Activated T-helper 2 cell treated with anti-CD3 and anti-CD28 coated beads, Interferon-gamma antibody, Interleukin-2, Interleukin-4, amounts not matched to agents 10 μg/mL and 5 μg/mL and 100 μg/mL, durations not matched to agents 14 hours and 24 hours and 36 hours (primary cell): ENCODE measurements at regions of chr19 and their contacts with region 1.

Region 1: DNA sequence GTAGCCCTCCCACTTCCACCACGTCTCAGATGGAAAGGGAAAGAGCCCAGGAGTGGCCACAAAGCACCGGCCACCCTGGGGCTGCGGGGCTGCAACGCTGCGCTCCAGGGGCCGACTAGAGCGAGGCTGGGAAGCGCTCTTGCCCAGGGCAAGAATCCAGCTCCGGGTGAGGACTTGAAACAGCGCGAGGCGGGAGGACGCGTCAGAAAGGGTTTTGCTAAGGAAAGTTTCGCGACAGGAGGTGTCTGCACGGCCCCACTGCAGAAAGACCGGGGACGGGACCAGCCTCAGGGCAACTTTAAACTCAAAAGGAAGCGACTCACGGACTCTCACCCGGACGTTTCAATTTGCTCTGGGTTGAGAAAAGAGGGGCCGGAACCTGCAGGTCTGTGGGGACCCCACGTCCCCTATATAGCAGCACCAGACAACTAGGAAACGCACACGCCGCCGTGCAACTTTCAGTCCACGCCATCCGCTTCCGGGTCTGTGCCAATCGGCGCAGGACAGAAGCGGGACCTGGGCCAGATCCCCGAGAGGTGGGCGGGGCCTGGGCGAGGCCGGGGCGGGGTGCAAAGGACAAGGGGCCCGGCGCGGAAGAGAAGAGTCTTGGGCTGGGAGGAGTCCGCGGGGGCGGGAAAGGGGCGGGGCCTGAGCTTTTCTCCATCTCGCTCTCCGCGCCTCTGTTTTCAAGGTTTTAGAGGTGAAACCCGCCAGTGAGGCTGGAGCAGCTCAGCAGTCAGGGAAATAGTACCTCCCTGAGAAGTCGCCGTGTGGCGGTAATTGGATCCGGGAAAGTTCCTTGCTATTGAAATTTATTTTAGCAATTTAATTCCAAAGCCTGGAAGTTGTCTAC is at the start of gene ZNF816:
- DNase-seq: peak; percentile 98
- H3K4me3 Mint-ChIP-seq: peak within 1 kb of the TSS; percentile 97
- H3K27ac Mint-ChIP-seq: peak within 1 kb of the TSS; percentile 92
- H3K4me1 Mint-ChIP-seq: peaks cover 14% of the 10 kb centered on the region
- H3K27me3 Mint-ChIP-seq: no peaks in the 10 kb centered on the region
- total RNA-seq, gene ZNF816: 8.1 and 8.4 TPM in 2 replicates

Region 2: GRCh38 chr19:52637718-52638585 is 324.7 kb before region 1 on chr19 and contains the start of gene ZNF83:
- intact Hi-C with region 1: loop called (anchors 10 kb)
- DNase-seq: peak; percentile 92
- H3K4me3 Mint-ChIP-seq: peak within 1 kb of the TSS; percentile 89
- H3K27ac Mint-ChIP-seq: peak within 1 kb of the TSS; percentile 95
- H3K4me1 Mint-ChIP-seq: peaks cover 13% of the 10 kb centered on the region
- H3K27me3 Mint-ChIP-seq: no peaks in the 10 kb centered on the region
- total RNA-seq, gene ZNF83: 23.1 and 24.1 TPM in 2 replicates

Region 3: DNA sequence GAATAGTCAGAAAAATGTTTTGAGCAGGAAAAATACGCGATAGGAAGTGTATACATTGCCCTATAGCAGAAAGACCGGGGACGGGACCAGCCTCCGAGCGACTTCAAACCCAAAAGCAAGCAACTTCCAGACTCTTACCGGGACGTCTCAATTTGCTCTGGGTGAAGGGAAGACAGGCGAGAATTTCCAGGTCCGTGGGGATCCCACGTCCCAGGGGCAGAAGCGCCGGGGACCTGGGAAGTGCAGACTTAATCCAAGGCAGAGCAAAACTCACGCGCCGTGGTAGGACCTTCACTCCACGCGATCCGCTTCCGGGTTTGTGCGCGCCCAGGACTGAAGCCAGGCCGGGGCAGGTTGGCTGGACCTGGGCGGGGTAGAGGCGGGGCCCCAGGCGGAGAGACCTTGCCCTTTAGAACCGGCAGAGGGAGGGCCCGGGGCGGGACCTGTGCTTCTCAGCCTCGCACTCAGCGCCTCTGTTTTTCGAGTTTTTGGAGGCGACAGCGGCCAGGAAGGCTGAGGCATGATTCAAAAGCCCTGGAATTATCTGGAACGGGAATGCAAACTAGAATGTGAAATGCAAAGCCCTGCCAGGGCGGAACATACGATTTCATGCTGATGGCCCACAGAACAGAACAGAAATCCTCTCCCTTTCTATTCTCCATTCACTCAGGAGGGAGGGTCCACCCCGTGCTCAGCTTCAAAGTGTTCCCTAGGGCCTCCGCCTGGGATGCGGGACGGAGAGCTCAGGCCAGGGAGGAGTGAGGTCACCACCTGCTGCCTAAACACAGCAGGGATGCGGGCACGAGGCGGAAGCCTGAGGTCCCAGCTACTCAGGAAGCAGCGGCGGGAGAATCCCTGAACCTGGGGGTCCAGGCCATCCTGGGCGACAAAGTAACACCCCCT is 175.9 kb before region 1 on chr19 and contains the start of gene ZNF600:
- intact Hi-C with region 1: loop called (anchors 2 kb)
- DNase-seq: peak; percentile 57
- H3K4me3 Mint-ChIP-seq: peak within 1 kb of the TSS; percentile 85
- H3K27ac Mint-ChIP-seq: peak within 1 kb of the TSS; percentile 50
- H3K4me1 Mint-ChIP-seq: peaks cover 22% of the 10 kb centered on the region
- H3K27me3 Mint-ChIP-seq: no peaks in the 10 kb centered on the region
- total RNA-seq, gene ZNF600: 7.9 and 11.3 TPM in 2 replicates

Region 4: GRCh38 chr19:52889932-52890331 is 72.7 kb before region 1 on chr19:
- intact Hi-C with region 1: no loop called
- DNase-seq: no peak
- H3K4me3 Mint-ChIP-seq: no peak overlapping the region
- H3K27ac Mint-ChIP-seq: no peak overlapping the region
- H3K4me1 Mint-ChIP-seq: no peaks in the 10 kb centered on the region
- H3K27me3 Mint-ChIP-seq: no peaks in the 10 kb centered on the region

Region 5: DNA sequence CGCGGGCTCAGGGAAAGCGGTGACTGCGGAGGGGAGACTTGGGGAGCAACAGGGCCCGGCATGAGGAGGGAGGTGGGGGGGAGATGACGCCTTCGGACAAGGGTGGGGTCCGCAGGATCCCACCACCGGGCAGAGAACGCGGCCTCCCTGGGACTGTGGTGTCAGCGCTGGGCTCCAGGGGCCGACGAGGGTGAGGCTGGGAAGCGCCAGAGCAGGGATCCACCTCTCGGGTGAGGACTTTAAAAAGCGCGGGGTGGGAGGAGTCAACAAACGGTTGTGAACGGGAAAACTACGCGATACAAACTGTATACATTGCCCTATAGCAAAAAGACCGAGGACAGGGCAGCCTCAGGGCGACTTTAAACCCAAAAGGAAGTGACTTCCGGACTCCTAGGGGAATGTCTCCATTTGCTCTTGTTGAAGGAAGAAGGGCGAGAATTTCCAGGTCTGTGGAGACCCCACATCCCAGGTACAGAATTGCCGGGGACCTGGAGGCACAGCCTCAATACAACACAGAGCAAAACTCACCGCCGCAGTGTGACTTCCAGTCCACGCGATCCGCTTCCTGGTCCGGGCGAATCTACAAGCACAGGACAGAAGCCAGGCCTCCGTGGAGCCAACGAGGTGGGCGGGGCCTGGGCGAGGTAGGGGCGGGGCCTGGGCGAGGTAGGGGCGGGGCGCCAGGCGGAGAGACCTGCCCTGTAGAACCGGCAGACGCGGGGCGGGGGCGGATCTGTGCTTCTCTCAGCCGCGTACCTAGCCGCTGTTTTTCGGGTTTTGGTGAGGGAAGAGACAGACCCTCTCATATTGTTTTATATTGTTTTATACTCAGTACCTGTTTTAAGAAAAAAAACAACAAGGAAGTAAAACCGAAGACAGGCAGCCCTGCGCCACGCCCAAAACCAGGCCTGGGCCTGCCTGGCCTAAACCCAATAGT is 39.5 kb before region 1 on chr19 and contains the start of gene ZNF888:
- intact Hi-C with region 1: loop called (anchors 2 kb)
- DNase-seq: peak; percentile 81
- H3K4me3 Mint-ChIP-seq: peak within 1 kb of the TSS; percentile 92
- H3K27ac Mint-ChIP-seq: peak within 1 kb of the TSS; percentile 90
- H3K4me1 Mint-ChIP-seq: peaks cover 21% of the 10 kb centered on the region
- H3K27me3 Mint-ChIP-seq: no peaks in the 10 kb centered on the region
- total RNA-seq, gene ZNF888: 5.0 and 6.1 TPM in 2 replicates

Region 6: DNA sequence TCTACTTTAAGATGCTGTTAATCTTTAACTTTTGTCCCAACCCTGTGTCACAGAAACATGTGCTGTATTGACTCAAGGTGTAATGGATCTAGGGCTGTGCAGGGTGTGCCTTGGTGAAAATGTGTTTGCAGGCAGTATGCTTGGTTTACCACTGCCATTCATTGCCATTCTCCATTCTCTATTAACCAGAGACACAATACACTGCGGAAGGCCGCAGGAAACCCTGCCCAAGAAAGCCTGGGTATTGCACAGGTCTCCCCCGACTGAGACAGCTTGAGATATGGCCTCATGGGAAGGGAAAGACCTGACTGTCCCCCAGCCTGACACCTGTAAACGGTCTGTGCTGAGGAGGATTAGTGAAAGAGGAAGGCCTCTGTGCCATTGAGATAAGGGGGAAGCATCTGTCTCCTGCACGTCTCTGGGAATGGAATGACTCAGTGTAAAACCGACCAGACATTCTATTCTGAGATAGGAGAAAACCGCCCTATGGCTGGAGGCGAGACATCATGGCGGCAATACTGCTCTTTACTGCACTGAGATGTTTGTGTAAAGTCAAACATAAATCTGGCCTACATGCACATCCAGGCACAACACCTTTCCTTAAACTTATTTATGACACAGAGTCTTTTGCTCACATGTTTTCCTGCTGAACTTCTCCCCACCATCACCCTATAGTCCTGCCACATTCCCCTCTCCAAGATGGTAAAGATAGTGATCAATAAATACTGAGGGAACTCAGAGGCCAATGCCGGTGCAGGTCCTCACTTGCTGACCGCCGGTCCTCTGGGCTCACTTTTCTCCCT is 26.3 kb before region 1 on chr19:
- intact Hi-C with region 1: no loop called
- DNase-seq: no peak
- H3K4me3 Mint-ChIP-seq: no peak overlapping the region
- H3K27ac Mint-ChIP-seq: no peak overlapping the region
- H3K4me1 Mint-ChIP-seq: peaks cover 23% of the 10 kb centered on the region
- H3K27me3 Mint-ChIP-seq: no peaks in the 10 kb centered on the region

Region 7: GRCh38 chr19:53431399-53432087 is 468.9 kb after region 1 on chr19 and contains the start of gene ZNF761:
- intact Hi-C with region 1: loop called (anchors 1 kb)
- DNase-seq: peak; percentile 96
- H3K4me3 Mint-ChIP-seq: peak within 1 kb of the TSS; percentile 94
- H3K27ac Mint-ChIP-seq: peak within 1 kb of the TSS; percentile 87
- H3K4me1 Mint-ChIP-seq: peaks cover 14% of the 10 kb centered on the region
- H3K27me3 Mint-ChIP-seq: no peaks in the 10 kb centered on the region
- total RNA-seq, gene ZNF761: 12.1 and 12.2 TPM in 2 replicates